ENCODE measurements at regions of chr2 and their contacts with region 1.

Region 1: GRCh38 chr2:39913648-39914461 is 134.8 kb upstream of the THUMPD2 start:
- DNase-seq: peak; percentile 59
- ATAC-seq: peak; percentile 72
- H3K4me3 ChIP-seq: no peak overlapping the region
- H3K27ac ChIP-seq: no peak overlapping the region
- H3K4me1 ChIP-seq: no peaks in the 10 kb centered on the region
- H3K27me3 ChIP-seq: peaks cover 39% of the 10 kb centered on the region
- CTCF ChIP-seq: peak; percentile 64 to 84 (median 64)
- POLR2A ChIP-seq: no peak
- RAD21 ChIP-seq: peak; percentile 91

Region 2: DNA sequence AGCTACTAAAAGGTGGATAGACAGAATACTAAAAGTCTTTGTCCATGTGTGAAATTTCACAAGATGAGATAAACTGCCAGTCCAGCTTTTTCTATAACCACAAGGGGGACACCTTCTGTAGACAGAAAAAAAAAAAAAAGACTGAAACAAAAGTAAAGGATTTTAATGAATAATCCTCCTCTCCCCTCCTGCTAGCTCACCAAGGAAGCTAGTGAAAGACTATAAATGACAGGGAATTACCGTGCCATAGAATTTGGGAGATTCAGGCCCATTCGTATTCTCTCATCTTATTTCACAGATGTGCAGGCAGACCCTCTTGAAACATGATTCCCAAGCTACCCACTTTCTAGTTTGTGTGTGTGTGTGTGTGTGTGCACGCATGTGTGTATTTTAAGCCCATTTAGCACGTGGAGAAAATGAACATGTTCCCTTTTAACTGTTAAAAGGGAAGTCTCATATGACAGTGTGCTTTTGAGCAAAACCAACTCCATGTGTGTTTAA is 574.3 kb after region 1 on chr2:
- CTCF ChIA-PET with region 1: interaction called, 4 read pairs
- POLR2A ChIA-PET with region 1: no interaction called
- RAD21 ChIA-PET with region 1: no interaction called
- intact Hi-C with region 1: loop called (anchors 5 kb)
- DNase-seq: peak; percentile 2
- ATAC-seq: no peak
- H3K4me3 ChIP-seq: no peak overlapping the region
- H3K27ac ChIP-seq: no peak overlapping the region
- H3K4me1 ChIP-seq: no peaks in the 10 kb centered on the region
- H3K27me3 ChIP-seq: peaks cover 3% of the 10 kb centered on the region; the same call in 1 of the 2 replicates
- CTCF ChIP-seq: peak; percentile 8 to 58 (median 46); a peak in 4 of 6 replicates
- POLR2A ChIP-seq: no peak
- RAD21 ChIP-seq: 0 out of 2 replicates have a peak, but pooled peaks have one; percentile 18

Region 3: DNA sequence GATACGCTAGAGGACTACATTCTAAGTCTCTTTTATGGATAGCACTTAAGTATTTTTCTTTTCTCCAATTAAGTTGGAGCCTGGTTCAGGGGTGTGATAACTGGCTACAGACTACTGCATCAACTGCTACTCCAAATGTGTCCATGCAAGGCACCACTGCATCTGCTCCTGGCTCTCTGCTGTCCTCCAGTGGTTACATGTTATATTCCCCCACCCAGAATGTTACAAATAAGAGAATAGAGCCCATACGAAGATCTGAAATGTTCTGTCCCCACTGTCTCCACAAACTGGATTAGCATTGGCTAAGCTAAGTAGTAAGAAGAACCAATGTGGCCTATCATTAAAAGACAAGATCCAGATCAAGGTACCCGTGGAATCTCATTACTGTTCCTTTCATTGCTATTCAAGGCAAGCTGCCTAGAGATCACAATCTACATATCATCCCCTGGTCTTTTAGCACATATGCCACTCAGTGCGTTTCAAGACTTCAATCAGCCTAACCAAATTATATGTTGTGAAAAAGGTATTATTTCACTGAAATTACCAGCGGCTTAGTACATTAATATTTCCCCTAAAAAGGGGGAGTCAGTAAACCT is 846.3 kb after region 1 on chr2:
- CTCF ChIA-PET with region 1: interaction called, 5 read pairs
- POLR2A ChIA-PET with region 1: no interaction called
- RAD21 ChIA-PET with region 1: no interaction called
- intact Hi-C with region 1: loop called (anchors 5 kb)
- DNase-seq: peak; percentile 6
- ATAC-seq: peak; percentile 73
- H3K4me3 ChIP-seq: no peak overlapping the region
- H3K27ac ChIP-seq: no peak overlapping the region
- H3K4me1 ChIP-seq: no peaks in the 10 kb centered on the region
- H3K27me3 ChIP-seq: no peaks in the 10 kb centered on the region
- CTCF ChIP-seq: peak; percentile 24 to 69 (median 57); a peak in 5 of 6 replicates
- POLR2A ChIP-seq: no peak
- RAD21 ChIP-seq: peak; percentile 48; the same call in 1 of the 2 replicates

Region 4: DNA sequence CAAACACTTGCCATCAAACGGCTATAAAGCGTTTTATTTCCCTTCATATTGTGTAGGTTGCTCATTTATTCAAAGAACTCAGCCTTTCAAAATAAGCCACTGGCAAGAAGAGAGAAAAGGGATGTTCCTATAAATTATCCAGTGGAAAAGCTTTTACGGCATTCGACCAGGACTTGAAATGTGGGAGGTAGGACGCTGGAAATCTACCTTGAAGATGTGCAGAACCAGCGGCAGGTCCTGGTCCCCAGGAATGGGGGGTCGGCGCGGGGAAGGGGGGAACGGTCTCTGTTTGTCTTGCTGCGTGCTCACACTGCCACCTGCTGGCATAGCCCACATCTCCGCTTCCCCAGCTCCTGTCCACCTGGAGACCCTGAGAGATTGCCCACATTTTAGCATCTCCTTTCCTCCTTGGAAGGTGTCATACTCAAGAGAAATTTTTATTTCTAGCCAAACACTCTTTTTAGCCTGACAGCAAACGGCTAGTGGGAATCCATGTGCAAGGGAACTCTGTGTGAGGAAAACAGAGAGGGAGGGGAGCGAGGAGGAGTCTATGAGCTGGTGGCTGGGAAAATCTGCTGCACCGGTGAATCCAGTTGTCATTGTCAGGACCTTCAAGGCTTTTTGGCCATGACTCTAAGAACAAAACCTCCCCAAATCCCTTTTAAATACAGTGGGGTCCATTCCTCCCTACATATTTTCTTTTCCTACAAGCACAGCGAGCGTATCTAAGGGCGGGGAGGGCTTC is 1785.0 kb after region 1 on chr2:
- CTCF ChIA-PET with region 1: interaction called, 17 read pairs
- POLR2A ChIA-PET with region 1: no interaction called
- RAD21 ChIA-PET with region 1: interaction called in 1 of 2 experiments, 3 read pairs
- intact Hi-C with region 1: loop called (anchors 2 kb)
- DNase-seq: no peak
- ATAC-seq: peak; percentile 72
- H3K4me3 ChIP-seq: no peak overlapping the region
- H3K27ac ChIP-seq: no peak overlapping the region
- H3K4me1 ChIP-seq: no peaks in the 10 kb centered on the region
- H3K27me3 ChIP-seq: peaks cover 4% of the 10 kb centered on the region; the same call in 1 of the 2 replicates
- CTCF ChIP-seq: peak in 2 of 3 experiments; percentile 74 to 77; a peak in 4 of 6 replicates
- POLR2A ChIP-seq: no peak
- RAD21 ChIP-seq: peak; percentile 55